CD8-positive, alpha-beta T cell (primary cell): ENCODE measurements at regions of chr5 and their contacts with region 1.

Region 1: GRCh38 chr5:171418316-171418981 is 998 bp upstream of the FGF18 start:
- DNase-seq: peak in 7 of 9 experiments; percentile 18 to 66 (median 46)
- ATAC-seq: peak; percentile 55
- H3K4me3 ChIP-seq: peak overlapping the region; percentile 48 to 58
- H3K4me3 Mint-ChIP-seq: peak overlapping the region; percentile 74
- H3K27ac ChIP-seq: no peak overlapping the region
- H3K27ac Mint-ChIP-seq: no peak overlapping the region
- H3K4me1 ChIP-seq: peaks cover 18% of the 10 kb centered on the region
- H3K4me1 Mint-ChIP-seq: peaks cover 9% of the 10 kb centered on the region
- H3K27me3 ChIP-seq: peaks cover 11% of the 10 kb centered on the region in 2 experiments
- H3K27me3 Mint-ChIP-seq: peaks cover 27% of the 10 kb centered on the region
- CTCF ChIP-seq: peak; percentile 60

Region 2: DNA sequence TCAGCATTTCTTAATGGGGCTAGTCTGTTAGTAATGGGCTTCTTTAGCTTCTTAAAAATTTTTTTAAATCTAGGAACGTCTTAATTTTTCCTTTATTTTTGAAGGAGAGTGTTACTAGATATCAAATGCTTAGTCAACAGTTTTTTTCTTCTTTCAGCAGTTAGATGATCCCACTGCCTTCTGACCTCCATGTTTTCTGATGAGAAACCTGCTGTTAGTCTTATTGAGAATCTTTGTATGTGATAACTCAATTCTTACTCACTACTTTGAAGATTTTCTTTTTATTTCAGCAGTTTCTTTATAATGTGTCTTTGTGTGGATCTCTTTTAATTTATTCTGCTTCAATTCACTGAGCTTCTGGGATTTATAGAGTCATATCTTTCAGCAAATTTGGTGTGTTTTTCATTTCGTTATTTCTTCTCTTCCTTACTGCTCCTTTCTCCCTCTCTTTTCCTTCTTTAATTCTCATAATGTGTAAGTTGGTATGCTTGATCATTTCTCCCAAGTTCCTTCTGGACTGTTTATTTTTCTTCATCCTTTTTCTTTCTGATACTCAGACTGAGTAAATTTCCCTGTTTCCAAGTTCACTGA is 350.8 kb before region 1 on chr5:
- CTCF ChIA-PET with region 1: no interaction called
- POLR2A ChIA-PET with region 1: no interaction called
- intact Hi-C with region 1: no loop called
- DNase-seq: no peak
- ATAC-seq: no peak
- H3K4me3 ChIP-seq: no peak overlapping the region
- H3K4me3 Mint-ChIP-seq: no peak overlapping the region
- H3K27ac ChIP-seq: no peak overlapping the region
- H3K27ac Mint-ChIP-seq: no peak overlapping the region
- H3K4me1 ChIP-seq: no peaks in the 10 kb centered on the region
- H3K4me1 Mint-ChIP-seq: no peaks in the 10 kb centered on the region
- H3K27me3 ChIP-seq: no peaks in the 10 kb centered on the region
- H3K27me3 Mint-ChIP-seq: peaks cover 2% of the 10 kb centered on the region
- CTCF ChIP-seq: no peak

Region 3: DNA sequence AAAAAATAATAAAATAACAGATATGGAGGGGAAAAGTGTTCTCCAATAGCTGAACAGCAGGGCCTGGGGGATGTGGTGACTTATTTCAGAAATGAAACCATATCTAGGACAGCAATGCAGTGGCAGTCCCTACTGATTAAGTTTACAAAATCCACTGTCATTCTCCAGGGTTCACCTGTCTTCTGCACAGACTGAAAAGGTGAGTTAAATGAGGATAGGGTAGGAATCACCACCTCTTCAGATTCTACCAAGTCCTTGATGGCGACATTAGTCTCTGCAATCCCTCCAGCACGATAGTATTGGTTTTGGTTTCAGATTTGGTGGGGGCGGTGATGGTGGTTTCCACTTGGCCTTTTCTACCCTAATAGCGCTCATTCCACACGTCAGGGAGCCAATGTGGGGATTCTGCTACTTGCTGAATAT is 63.1 kb before region 1 on chr5:
- CTCF ChIA-PET with region 1: no interaction called
- POLR2A ChIA-PET with region 1: no interaction called
- intact Hi-C with region 1: no loop called
- DNase-seq: peak in 2 of 9 experiments; percentile 43 to 61
- ATAC-seq: peak; percentile 54
- H3K4me3 ChIP-seq: peak overlapping the region in 1 of 2 experiments; percentile 27
- H3K4me3 Mint-ChIP-seq: peak overlapping the region; percentile 70
- H3K27ac ChIP-seq: no peak overlapping the region
- H3K27ac Mint-ChIP-seq: peak overlapping the region; percentile 18
- H3K4me1 ChIP-seq: no peaks in the 10 kb centered on the region
- H3K4me1 Mint-ChIP-seq: peaks cover 3% of the 10 kb centered on the region
- H3K27me3 ChIP-seq: no peaks in the 10 kb centered on the region
- H3K27me3 Mint-ChIP-seq: no peaks in the 10 kb centered on the region
- CTCF ChIP-seq: no peak

Region 4: DNA sequence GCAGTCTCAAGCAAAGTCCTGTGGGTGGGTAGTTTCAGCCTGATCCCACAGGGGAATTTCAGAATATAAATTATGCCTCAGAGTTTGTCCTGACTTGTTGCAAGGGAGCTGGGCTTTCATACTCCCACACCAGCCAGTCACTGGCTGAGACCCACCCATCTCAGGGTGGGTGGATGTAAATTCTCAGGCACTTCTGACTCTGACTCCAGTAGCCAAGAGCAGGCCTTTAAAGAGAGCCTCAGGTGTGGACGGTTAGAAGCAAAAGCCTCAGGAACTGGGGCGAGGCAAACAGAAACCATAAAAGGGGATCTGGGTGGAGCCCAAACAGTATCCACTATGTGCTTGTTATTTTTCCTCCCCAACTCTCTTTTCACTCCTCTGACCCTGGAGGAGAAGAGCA is 616.6 kb after region 1 on chr5:
- CTCF ChIA-PET with region 1: no interaction called
- POLR2A ChIA-PET with region 1: no interaction called
- intact Hi-C with region 1: loop called (anchors 2 to 10 kb)
- DNase-seq: no peak
- ATAC-seq: no peak
- H3K4me3 ChIP-seq: no peak overlapping the region
- H3K4me3 Mint-ChIP-seq: no peak overlapping the region
- H3K27ac ChIP-seq: no peak overlapping the region
- H3K27ac Mint-ChIP-seq: no peak overlapping the region
- H3K4me1 ChIP-seq: no peaks in the 10 kb centered on the region
- H3K4me1 Mint-ChIP-seq: peaks cover 11% of the 10 kb centered on the region
- H3K27me3 ChIP-seq: no peaks in the 10 kb centered on the region
- H3K27me3 Mint-ChIP-seq: no peaks in the 10 kb centered on the region
- CTCF ChIP-seq: no peak

Region 5: GRCh38 chr5:172044631-172045314 is 626.3 kb after region 1 on chr5:
- CTCF ChIA-PET with region 1: interaction called, 3 read pairs
- POLR2A ChIA-PET with region 1: interaction called, 3 read pairs
- intact Hi-C with region 1: loop called (anchors 2 to 10 kb)
- DNase-seq: no peak
- ATAC-seq: no peak
- H3K4me3 ChIP-seq: no peak overlapping the region
- H3K4me3 Mint-ChIP-seq: no peak overlapping the region
- H3K27ac ChIP-seq: no peak overlapping the region
- H3K27ac Mint-ChIP-seq: peak overlapping the region; percentile 78
- H3K4me1 ChIP-seq: no peaks in the 10 kb centered on the region
- H3K4me1 Mint-ChIP-seq: peaks cover 11% of the 10 kb centered on the region
- H3K27me3 ChIP-seq: no peaks in the 10 kb centered on the region
- H3K27me3 Mint-ChIP-seq: no peaks in the 10 kb centered on the region
- CTCF ChIP-seq: no peak

Region 6: DNA sequence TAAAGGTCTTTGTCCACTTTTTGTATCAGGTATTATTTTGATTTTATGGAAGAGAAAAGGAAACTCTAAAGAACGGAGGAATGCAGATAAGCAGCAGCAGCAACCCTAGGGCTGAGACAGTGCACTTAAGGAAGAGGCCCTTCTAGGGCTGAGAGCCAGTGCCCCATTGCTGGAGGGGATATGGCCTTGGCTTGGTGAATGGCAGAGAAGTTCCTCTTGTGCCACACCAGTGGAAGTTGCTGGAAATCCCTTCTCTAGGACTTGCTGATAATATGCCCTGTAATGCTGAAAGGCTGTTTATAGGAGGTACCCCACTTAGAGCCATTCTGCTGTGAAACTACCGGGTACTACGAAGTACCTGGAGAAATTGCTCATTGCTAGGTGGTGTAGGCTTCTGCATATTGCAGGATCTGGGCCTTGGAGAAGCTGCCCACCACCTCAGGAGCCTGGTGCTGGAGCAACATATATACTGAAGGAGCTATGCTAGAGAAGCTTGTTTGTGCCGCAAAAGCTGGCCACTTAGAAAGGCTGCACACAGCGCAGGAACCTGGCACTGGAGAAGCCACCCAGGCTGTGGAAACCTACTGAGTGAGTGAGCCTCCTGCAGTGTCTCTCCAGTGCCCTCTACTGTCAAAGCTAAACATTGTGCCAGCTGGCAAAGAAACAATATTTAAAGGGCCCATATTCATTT is 874.8 kb after region 1 on chr5:
- CTCF ChIA-PET with region 1: interaction called, 3 read pairs
- POLR2A ChIA-PET with region 1: no interaction called
- intact Hi-C with region 1: loop called in 1 of 2 experiments (anchors 2 kb)
- DNase-seq: peak; percentile 16 to 78 (median 53)
- ATAC-seq: peak; percentile 100
- H3K4me3 ChIP-seq: no peak overlapping the region
- H3K4me3 Mint-ChIP-seq: no peak overlapping the region
- H3K27ac ChIP-seq: no peak overlapping the region
- H3K27ac Mint-ChIP-seq: no peak overlapping the region
- H3K4me1 ChIP-seq: no peaks in the 10 kb centered on the region
- H3K4me1 Mint-ChIP-seq: peaks cover 2% of the 10 kb centered on the region
- H3K27me3 ChIP-seq: no peaks in the 10 kb centered on the region
- H3K27me3 Mint-ChIP-seq: peaks cover 3% of the 10 kb centered on the region
- CTCF ChIP-seq: peak; percentile 82